ENCODE measurements at regions of chr12 and their contacts with region 1.

Region 1: DNA sequence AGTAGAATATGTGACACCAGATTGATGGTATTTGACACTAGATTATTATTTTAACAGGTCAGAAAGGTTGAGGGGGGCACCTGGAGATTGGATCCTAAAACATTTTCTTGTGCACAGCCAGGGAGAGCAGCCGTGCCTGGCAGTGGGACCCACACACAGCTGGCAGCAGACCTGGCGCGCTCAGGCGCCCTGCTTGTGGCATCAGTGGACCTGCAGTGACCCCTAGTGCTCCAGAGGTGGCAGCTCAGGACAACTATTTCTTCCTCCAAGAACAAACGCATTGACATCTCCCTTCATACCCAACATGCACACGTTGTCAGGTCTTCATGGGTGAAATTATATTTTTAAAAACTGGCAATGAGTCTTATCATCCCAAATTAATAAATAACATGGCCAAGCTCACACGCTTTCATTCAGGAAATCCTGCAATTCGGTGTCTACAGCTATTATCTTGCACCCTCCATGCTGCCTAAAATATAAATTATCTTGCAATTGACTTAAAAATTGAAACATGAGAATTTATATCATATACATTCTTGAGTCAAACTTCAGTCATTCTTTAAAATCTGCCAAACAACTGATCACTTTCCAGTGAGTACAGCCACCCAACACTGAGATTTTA is 7.7 kb upstream of the TMEM132D start:
- DNase-seq: peak; percentile 49
- H3K4me3 ChIP-seq: no peak overlapping the region
- H3K27ac ChIP-seq: no peak overlapping the region
- H3K4me1 ChIP-seq: no peaks in the 10 kb centered on the region
- CTCF ChIP-seq: peak; percentile 83

Region 2: DNA sequence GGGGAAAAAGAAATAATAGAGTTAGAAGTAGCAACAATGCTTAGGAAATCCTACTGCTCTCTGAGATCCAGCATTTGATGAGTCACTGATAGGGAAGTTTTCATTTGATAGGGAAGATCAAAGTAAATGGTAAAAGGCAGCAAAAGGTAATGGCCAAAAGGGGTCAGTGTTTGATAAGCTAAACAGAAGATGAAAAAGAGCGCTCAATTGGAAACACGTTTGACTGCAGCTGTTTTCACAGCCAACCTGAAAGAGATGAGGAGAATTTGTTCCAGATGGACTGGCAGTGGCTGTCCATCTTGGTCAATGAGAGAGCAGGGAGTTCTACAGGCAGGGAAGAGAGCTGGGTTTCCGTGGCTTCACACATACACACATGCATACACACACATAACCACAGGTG is 1380.4 kb before region 1 on chr12:
- CTCF ChIA-PET with region 1: no interaction called
- POLR2A ChIA-PET with region 1: no interaction called
- intact Hi-C with region 1: loop called (anchors 2 kb)
- DNase-seq: peak; percentile 65
- H3K4me3 ChIP-seq: no peak overlapping the region
- H3K27ac ChIP-seq: no peak overlapping the region
- H3K4me1 ChIP-seq: peaks cover 20% of the 10 kb centered on the region
- CTCF ChIP-seq: peak; percentile 84

Region 3: DNA sequence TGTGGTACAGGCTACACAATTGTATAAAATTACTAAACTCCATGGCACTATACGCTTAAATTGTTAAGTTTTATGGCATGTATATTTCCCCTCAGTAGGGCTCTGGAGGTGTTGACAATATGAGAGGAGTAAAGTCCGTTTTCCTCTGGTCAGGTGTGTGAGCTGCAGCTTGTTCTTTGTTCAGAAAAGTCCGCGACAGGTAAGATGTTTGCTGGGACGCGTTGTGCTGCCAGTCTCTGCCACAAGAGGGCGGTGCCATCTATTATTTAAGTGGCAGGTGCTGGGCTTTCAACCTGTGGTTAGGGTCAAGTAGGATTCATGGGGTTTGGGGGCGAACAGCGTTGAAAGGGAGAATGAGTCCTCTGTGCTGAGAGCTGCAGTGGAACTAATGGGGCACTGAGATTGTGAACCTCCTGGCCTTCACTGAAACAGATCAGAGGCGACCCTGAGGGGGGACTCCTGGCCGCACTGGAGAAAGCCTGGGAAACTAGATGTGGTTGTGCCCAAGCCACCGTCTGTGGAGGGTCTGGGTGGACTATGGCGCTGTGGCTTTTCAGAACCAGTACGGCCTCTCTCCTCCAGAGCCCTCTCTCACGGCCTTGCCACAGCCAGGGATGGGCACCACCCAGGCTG is 1266.8 kb before region 1 on chr12:
- CTCF ChIA-PET with region 1: no interaction called
- POLR2A ChIA-PET with region 1: no interaction called
- intact Hi-C with region 1: loop called (anchors 10 kb)
- DNase-seq: peak; percentile 60
- H3K4me3 ChIP-seq: no peak overlapping the region
- H3K27ac ChIP-seq: no peak overlapping the region
- H3K4me1 ChIP-seq: no peaks in the 10 kb centered on the region
- CTCF ChIP-seq: peak; percentile 92

Region 4: GRCh38 chr12:128969480-128970055 is 942.0 kb before region 1 on chr12:
- CTCF ChIA-PET with region 1: no interaction called
- POLR2A ChIA-PET with region 1: no interaction called
- intact Hi-C with region 1: loop called (anchors 5 kb)
- DNase-seq: peak; percentile 52
- H3K4me3 ChIP-seq: no peak overlapping the region
- H3K27ac ChIP-seq: no peak overlapping the region
- H3K4me1 ChIP-seq: peaks cover 4% of the 10 kb centered on the region
- CTCF ChIP-seq: peak; percentile 75

Measured in OCI-LY7 (cell line).